Caco-2 (cell line): ENCODE measurements at regions of chr5 and their contacts with region 1.

Region 1: DNA sequence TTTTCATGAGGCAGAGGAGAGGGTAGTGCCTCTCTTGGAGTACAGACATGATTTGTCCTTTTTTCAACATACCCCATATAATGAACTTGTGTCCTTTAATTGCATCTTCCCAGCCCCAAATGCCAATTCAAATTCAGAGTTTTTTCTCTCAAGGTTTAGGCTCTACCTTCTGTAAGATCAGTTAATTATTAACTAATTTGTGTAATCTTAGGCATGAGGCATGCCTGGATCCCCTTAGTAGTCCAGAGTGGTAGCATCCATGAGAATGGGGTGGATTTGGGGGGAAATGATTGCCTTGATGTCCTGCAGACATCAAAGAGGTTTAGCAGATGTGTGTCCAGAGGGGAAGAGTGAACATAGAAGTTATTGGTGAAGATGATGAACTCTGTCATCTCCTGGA is 533.3 kb downstream of the LRRC70 start:
- DNase-seq: peak in 1 of 2 experiments; percentile 5
- H3K4me3 ChIP-seq: no peak overlapping the region
- H3K4me3 Mint-ChIP-seq: no peak overlapping the region
- H3K27ac Mint-ChIP-seq: no peak overlapping the region
- H3K4me1 ChIP-seq: peaks cover 11% of the 10 kb centered on the region
- H3K4me1 Mint-ChIP-seq: peaks cover 8% of the 10 kb centered on the region
- H3K27me3 ChIP-seq: no peaks in the 10 kb centered on the region
- H3K27me3 Mint-ChIP-seq: no peaks in the 10 kb centered on the region
- CTCF ChIP-seq: no peak

Region 2: GRCh38 chr5:62499756-62500155 is 612.1 kb before region 1 on chr5:
- CTCF ChIA-PET with region 1: no interaction called
- POLR2A ChIA-PET with region 1: interaction called, 10 read pairs
- intact Hi-C with region 1: no loop called
- DNase-seq: no peak
- H3K4me3 ChIP-seq: no peak overlapping the region
- H3K4me3 Mint-ChIP-seq: no peak overlapping the region
- H3K27ac Mint-ChIP-seq: no peak overlapping the region
- H3K4me1 ChIP-seq: no peaks in the 10 kb centered on the region
- H3K4me1 Mint-ChIP-seq: no peaks in the 10 kb centered on the region
- H3K27me3 ChIP-seq: no peaks in the 10 kb centered on the region
- H3K27me3 Mint-ChIP-seq: no peaks in the 10 kb centered on the region
- CTCF ChIP-seq: no peak

Region 3: GRCh38 chr5:63125862-63126261 is 14.0 kb after region 1 on chr5:
- CTCF ChIA-PET with region 1: no interaction called
- POLR2A ChIA-PET with region 1: no interaction called
- intact Hi-C with region 1: no loop called
- DNase-seq: peak; percentile 26 to 31
- H3K4me3 ChIP-seq: no peak overlapping the region
- H3K4me3 Mint-ChIP-seq: no peak overlapping the region
- H3K27ac Mint-ChIP-seq: no peak overlapping the region
- H3K4me1 ChIP-seq: no peaks in the 10 kb centered on the region
- H3K4me1 Mint-ChIP-seq: peaks cover 7% of the 10 kb centered on the region
- H3K27me3 ChIP-seq: no peaks in the 10 kb centered on the region
- H3K27me3 Mint-ChIP-seq: no peaks in the 10 kb centered on the region
- CTCF ChIP-seq: peak; percentile 63